ENCODE measurements at regions of chr12 and their contacts with region 1.

Region 1: GRCh38 chr12:15276088-15276698 is 46.1 kb upstream of the PTPRO start:
- DNase-seq: no peak
- H3K4me3 ChIP-seq: no peak overlapping the region
- CTCF ChIP-seq: peak; percentile 57

Region 2: GRCh38 chr12:15289192-15289591 is 13.0 kb after region 1 on chr12:
- CTCF ChIA-PET with region 1: interaction called, 11 read pairs
- POLR2A ChIA-PET with region 1: no interaction called
- DNase-seq: no peak
- H3K4me3 ChIP-seq: no peak overlapping the region
- CTCF ChIP-seq: no peak

Region 3: DNA sequence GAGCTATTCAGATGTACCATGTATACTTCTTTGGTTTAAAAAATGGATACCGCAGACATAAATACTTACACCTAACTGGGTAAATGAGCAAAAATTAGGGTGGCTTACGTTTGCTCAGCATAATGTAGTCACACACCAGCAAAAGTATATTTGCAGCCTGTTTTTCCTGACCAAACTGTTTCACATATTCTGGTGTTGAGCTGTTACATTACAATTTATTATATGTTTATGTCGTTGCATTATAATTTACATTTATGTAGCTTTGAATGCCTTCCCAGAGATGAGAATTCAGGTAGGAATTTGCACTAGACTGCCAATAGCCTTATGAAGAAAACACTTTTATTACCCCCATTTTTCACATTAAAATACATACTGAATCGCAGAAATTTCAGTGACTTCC is 229.4 kb after region 1 on chr12:
- CTCF ChIA-PET with region 1: interaction called, 13 read pairs
- POLR2A ChIA-PET with region 1: no interaction called
- DNase-seq: no peak
- H3K4me3 ChIP-seq: no peak overlapping the region
- CTCF ChIP-seq: no peak

Region 4: GRCh38 chr12:15522565-15523187 is 246.5 kb after region 1 on chr12:
- CTCF ChIA-PET with region 1: interaction called, 66 read pairs
- POLR2A ChIA-PET with region 1: no interaction called
- DNase-seq: no peak
- H3K4me3 ChIP-seq: no peak overlapping the region
- CTCF ChIP-seq: peak; percentile 22

Region 5: DNA sequence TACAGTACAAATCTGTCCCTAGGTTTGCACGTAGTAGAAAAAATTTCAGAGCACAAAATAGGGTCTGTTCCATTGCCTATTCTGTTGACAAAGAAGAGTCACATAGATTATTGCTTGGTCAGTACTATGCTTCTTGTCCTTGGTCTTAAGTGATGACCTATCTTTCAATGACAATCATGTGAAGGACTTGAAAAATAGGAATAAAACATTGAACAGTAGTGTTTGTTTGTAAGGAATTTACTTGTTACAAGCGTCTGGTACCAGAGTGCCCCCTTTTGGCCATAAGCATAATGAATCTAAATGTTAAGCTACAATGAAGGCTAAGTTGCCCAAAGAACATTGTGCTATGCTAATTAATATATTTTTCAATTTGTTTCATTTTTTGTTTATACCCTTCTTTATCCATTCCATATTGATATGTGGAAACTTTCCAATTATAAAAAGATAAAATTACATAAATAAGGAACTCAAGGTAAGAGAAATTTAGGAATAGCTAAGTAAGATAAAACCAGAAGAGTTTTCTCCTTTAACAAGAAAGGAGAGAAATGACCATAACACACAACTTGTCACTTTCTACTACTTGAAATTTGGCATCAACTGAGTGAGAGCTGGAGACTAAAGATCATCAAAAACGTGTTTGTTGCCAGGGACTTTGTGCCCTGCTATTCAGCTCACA is 308.3 kb after region 1 on chr12:
- CTCF ChIA-PET with region 1: interaction called, 74 read pairs
- POLR2A ChIA-PET with region 1: no interaction called
- DNase-seq: peak; percentile 60
- H3K4me3 ChIP-seq: no peak overlapping the region
- CTCF ChIP-seq: peak; percentile 61

Region 6: GRCh38 chr12:15856097-15856982 is 580.1 kb after region 1 on chr12:
- CTCF ChIA-PET with region 1: interaction called, 26 read pairs
- POLR2A ChIA-PET with region 1: no interaction called
- DNase-seq: no peak
- H3K4me3 ChIP-seq: no peak overlapping the region
- CTCF ChIP-seq: peak; percentile 49

Measured in AG04449 (cell line).